ENCODE measurements at regions of chr18 and their contacts with region 1.

Region 1: GRCh38 chr18:63823518-63824219 is 48.5 kb downstream of the SERPINB7 start:
- DNase-seq: peak; percentile 53
- H3K4me3 Mint-ChIP-seq: no peak overlapping the region
- H3K27ac Mint-ChIP-seq: no peak overlapping the region
- H3K4me1 Mint-ChIP-seq: no peaks in the 10 kb centered on the region
- H3K27me3 Mint-ChIP-seq: peaks cover 4% of the 10 kb centered on the region

Region 2: GRCh38 chr18:63936156-63936931 is 112.7 kb after region 1 on chr18:
- CTCF ChIA-PET with region 1: interaction called, 19 read pairs
- DNase-seq: peak; percentile 75
- H3K4me3 Mint-ChIP-seq: peak overlapping the region; percentile 58
- H3K27ac Mint-ChIP-seq: no peak overlapping the region
- H3K4me1 Mint-ChIP-seq: peaks cover 3% of the 10 kb centered on the region
- H3K27me3 Mint-ChIP-seq: peaks cover 8% of the 10 kb centered on the region